ENCODE measurements at regions of chr4 and their contacts with region 1.

Region 1: GRCh38 chr4:6942238-6942800 is 32.7 kb downstream of the TBC1D14 start:
- DNase-seq: peak; percentile 57 to 65 (median 63)
- H3K4me3 ChIP-seq: peak overlapping the region; percentile 25 to 30
- H3K4me3 Mint-ChIP-seq: peak overlapping the region; percentile 73 to 92 (median 82)
- H3K27ac ChIP-seq: peak overlapping the region; percentile 52
- H3K27ac Mint-ChIP-seq: peak overlapping the region; percentile 88 to 98 (median 89)
- H3K4me1 ChIP-seq: peaks cover 79% of the 10 kb centered on the region
- H3K4me1 Mint-ChIP-seq: peaks cover 54 to 87% (median 72%) of the 10 kb centered on the region in 4 donors
- H3K27me3 ChIP-seq: no peaks in the 10 kb centered on the region
- H3K27me3 Mint-ChIP-seq: no peaks in the 10 kb centered on the region

Region 2: GRCh38 chr4:6892190-6892908 is 50.0 kb before region 1 on chr4:
- CTCF ChIA-PET with region 1: no interaction called
- POLR2A ChIA-PET with region 1: no interaction called
- intact Hi-C with region 1: loop called (anchors 2 kb)
- DNase-seq: peak; percentile 25 to 56 (median 30)
- H3K4me3 ChIP-seq: peak overlapping the region; percentile 20 to 34
- H3K4me3 Mint-ChIP-seq: peak overlapping the region; percentile 10 to 87 (median 70)
- H3K27ac ChIP-seq: peak overlapping the region; percentile 30
- H3K27ac Mint-ChIP-seq: peak overlapping the region; percentile 13 to 90 (median 82)
- H3K4me1 ChIP-seq: peaks cover 24% of the 10 kb centered on the region
- H3K4me1 Mint-ChIP-seq: peaks cover 12 to 38% (median 24%) of the 10 kb centered on the region in 4 donors
- H3K27me3 ChIP-seq: no peaks in the 10 kb centered on the region
- H3K27me3 Mint-ChIP-seq: no peaks in the 10 kb centered on the region

Region 3: GRCh38 chr4:6917461-6918271 is 24.7 kb before region 1 on chr4:
- CTCF ChIA-PET with region 1: interaction called, 27 read pairs
- POLR2A ChIA-PET with region 1: interaction called, 65 read pairs
- intact Hi-C with region 1: loop called (anchors 1 kb)
- DNase-seq: peak in 1 of 5 donors; percentile 34
- H3K4me3 ChIP-seq: peak overlapping the region in 1 of 2 donors; percentile 47
- H3K4me3 Mint-ChIP-seq: peak overlapping the region; percentile 32 to 85 (median 66)
- H3K27ac ChIP-seq: peak overlapping the region; percentile 67
- H3K27ac Mint-ChIP-seq: peak overlapping the region; percentile 94 to 98 (median 96)
- H3K4me1 ChIP-seq: peaks cover 81% of the 10 kb centered on the region
- H3K4me1 Mint-ChIP-seq: peaks cover 54 to 89% (median 73%) of the 10 kb centered on the region in 4 donors
- H3K27me3 ChIP-seq: no peaks in the 10 kb centered on the region
- H3K27me3 Mint-ChIP-seq: no peaks in the 10 kb centered on the region

Region 4: DNA sequence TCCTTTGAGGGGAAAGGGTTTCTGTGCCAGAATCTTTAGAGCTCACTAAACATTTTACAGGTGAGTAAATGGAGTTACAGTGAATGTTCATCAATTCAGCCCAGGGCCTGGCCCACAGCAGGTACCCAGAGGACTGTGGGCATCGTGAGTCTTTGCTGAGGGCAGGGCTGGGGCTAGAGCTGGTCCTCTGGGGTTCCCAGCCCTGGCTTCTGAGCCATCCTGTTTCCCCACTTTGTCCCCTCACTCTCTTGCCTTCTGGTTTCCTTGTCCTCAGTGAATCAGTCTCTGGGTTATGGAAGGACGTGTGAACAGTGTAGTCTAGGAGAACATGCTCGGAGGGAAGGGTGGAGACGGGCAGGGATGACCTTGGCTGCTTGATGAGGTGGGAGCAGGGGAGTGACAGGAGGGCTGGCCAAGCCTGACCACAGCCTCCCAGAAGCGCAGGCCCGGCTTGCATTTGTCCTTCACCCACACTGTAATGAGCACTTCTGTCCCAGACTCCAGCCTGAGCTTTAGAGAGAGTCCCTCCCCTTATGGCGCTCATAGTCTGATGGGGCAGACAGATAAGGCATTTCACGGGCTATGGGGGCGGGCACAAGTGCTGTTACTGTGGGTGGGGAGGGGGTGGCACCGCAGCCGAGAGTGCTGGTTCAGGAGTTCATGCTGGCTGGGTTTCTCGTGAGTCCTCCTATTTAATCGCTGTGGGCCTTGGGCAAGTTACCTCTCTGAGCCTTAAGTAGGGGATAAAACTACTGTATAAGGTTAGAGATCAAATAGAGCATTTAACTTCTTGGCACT is 15.4 kb before region 1 on chr4:
- CTCF ChIA-PET with region 1: interaction called, 10 read pairs
- POLR2A ChIA-PET with region 1: interaction called, 45 read pairs
- intact Hi-C with region 1: loop called (anchors 1 kb)
- DNase-seq: peak; percentile 43 to 86 (median 55)
- H3K4me3 ChIP-seq: peak overlapping the region; percentile 31 to 33
- H3K4me3 Mint-ChIP-seq: peak overlapping the region; percentile 74 to 88 (median 82)
- H3K27ac ChIP-seq: peak overlapping the region; percentile 6
- H3K27ac Mint-ChIP-seq: peak overlapping the region; percentile 82 to 94 (median 91)
- H3K4me1 ChIP-seq: peaks cover 57% of the 10 kb centered on the region
- H3K4me1 Mint-ChIP-seq: peaks cover 68 to 91% (median 77%) of the 10 kb centered on the region in 4 donors
- H3K27me3 ChIP-seq: no peaks in the 10 kb centered on the region
- H3K27me3 Mint-ChIP-seq: no peaks in the 10 kb centered on the region

Region 5: DNA sequence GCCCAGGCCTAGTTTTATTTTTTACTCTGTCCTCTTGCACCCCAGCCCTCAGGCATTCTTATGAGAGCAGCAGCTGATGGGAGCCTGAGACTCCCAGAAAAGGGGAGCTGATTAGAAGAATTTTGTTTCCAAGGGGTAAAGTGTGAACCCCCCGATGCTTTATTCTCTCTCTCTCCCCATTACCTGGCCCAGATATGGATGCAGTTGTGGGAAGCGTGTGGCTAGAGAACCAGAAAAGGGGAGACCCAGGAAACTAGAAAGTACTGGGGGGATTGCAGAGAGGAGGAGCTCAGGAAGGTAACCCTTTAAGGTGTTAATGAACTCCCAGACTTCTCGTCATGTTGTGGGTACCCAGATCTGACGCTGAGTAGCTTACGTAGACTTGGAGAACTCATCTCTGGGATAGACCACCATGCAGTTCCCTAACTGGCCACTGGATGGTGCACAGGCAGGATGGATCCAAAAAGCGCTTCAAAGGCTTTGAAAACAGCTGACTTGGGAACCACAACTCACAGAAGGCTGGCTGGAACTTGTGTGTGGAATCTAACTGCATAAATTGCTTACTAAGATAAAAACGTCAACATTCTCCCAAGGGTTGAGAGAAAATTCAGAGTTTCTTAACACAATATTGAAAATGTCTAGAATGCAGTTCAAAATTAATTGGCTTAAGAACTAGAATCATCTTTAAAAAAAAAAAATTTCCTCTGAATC is 32.0 kb after region 1 on chr4:
- CTCF ChIA-PET with region 1: interaction called, 30 read pairs
- POLR2A ChIA-PET with region 1: interaction called, 8 read pairs
- intact Hi-C with region 1: no loop called
- DNase-seq: peak; percentile 73 to 83 (median 76)
- H3K4me3 ChIP-seq: no peak overlapping the region
- H3K4me3 Mint-ChIP-seq: no peak overlapping the region
- H3K27ac ChIP-seq: no peak overlapping the region
- H3K27ac Mint-ChIP-seq: peak overlapping the region; percentile 48 to 86 (median 72)
- H3K4me1 ChIP-seq: peaks cover 9% of the 10 kb centered on the region
- H3K4me1 Mint-ChIP-seq: peaks cover 18 to 35% (median 19%) of the 10 kb centered on the region in 4 donors
- H3K27me3 ChIP-seq: no peaks in the 10 kb centered on the region
- H3K27me3 Mint-ChIP-seq: no peaks in the 10 kb centered on the region

Region 6: DNA sequence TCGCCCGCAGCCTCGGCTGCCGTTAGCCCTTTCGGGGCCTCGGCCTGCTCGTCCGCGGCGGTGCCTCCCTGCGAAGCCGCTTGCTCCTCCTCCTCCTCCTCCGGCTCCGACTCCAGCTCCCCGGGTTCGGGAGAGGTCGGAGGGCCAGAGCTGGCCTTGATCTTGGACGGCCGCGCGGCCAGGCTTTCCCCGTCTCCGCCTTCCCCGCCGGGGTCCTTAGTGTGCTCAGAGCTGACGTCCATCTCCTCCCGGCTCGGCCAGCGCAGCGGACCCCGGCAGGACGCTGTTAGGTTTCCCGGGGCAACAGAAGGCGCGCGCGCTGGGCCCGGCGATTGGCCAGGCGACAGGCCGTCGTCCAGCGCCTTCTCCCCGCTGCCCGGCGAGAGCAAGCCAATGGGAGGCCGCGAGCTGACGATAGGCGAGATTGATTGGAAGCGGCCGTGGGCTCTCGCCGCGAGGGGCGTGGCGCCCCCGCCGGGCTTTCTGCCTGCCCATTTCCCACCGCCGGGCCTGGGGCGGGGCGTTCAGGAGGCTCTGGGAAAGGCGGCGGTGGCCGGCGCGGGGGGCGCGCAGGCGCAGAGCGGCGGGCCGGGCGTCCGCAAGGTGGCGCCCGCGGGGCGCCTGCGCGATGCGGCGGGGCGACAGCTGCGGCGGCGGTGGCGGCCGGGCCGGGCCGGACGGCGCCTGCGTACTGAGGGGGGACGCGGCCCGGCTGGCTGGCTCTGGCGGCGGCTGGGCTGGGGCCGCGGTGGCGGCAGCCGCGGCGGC is 100.6 kb after region 1 on chr4 and contains the start of gene TADA2B:
- CTCF ChIA-PET with region 1: no interaction called
- POLR2A ChIA-PET with region 1: interaction called, 11 read pairs
- intact Hi-C with region 1: no loop called
- DNase-seq: peak; percentile 90 to 94 (median 91)
- H3K4me3 ChIP-seq: peak within 1 kb of the TSS; percentile 83 to 91
- H3K4me3 Mint-ChIP-seq: peak within 1 kb of the TSS; percentile 89 to 97 (median 93)
- H3K27ac ChIP-seq: peak within 1 kb of the TSS; percentile 75
- H3K27ac Mint-ChIP-seq: peak within 1 kb of the TSS; percentile 81 to 95 (median 91)
- H3K4me1 ChIP-seq: peaks cover 45% of the 10 kb centered on the region
- H3K4me1 Mint-ChIP-seq: peaks cover 33 to 61% (median 40%) of the 10 kb centered on the region in 4 donors
- H3K27me3 ChIP-seq: no peaks in the 10 kb centered on the region
- H3K27me3 Mint-ChIP-seq: no peaks in the 10 kb centered on the region
- total RNA-seq, gene TADA2B: 46.4 to 49.0 TPM